ENCODE measurements at regions of chr3 and their contacts with region 1.

Region 1: GRCh38 chr3:36957862-36958686 is 13.2 kb upstream of the TRANK1 start:
- DNase-seq: no peak
- CTCF ChIP-seq: no peak

Region 2: GRCh38 chr3:36868614-36869436 is 89.2 kb before region 1 on chr3:
- CTCF ChIA-PET with region 1: interaction called, 28 read pairs
- POLR2A ChIA-PET with region 1: no interaction called
- DNase-seq: peak; percentile 57
- CTCF ChIP-seq: peak; percentile 76

Region 3: GRCh38 chr3:36893137-36893557 is 64.9 kb before region 1 on chr3:
- CTCF ChIA-PET with region 1: interaction called, 27 read pairs
- POLR2A ChIA-PET with region 1: no interaction called
- DNase-seq: peak; percentile 45
- CTCF ChIP-seq: no peak

Region 4: DNA sequence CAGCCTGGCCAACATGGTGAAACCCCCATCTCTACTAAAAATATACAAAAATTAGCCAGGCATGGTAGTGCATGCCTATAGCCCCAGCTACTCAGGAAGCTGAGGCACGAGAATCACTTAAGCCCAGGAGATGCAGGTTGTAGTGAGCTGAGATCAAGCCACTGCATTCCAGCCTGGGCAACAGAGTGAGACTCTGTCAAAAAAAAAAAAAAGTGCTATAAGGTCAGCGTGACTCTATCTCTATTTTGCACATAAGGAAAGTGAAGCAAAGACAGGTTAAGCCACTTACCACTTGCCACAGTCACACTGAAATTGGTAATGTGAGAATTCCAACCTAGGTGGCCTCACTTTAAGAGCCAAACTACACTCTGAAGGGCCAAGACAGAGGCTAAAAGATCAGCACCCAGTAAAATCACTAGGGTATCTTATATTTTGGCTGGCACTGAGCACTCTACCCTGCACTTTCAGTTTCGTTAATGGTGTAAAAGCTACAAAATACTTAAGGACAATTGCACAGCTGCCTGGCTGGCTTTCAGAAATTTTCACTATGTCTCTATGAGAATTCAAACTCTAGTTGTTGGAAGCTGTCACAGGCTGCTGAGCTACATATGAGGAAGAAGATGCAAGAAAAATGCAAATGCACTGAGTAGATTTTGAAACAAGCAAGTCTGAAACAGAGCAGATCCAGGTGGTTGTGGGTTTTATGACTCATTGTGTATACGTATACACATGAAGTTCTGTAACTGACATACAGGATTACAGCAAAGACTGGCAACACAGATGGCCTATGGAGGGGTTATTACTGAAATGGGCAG is 45.9 kb before region 1 on chr3:
- CTCF ChIA-PET with region 1: interaction called, 19 read pairs
- POLR2A ChIA-PET with region 1: no interaction called
- DNase-seq: peak; percentile 82
- CTCF ChIP-seq: no peak

Region 5: GRCh38 chr3:36933540-36934296 is 24.4 kb before region 1 on chr3:
- CTCF ChIA-PET with region 1: interaction called, 31 read pairs
- POLR2A ChIA-PET with region 1: no interaction called
- DNase-seq: no peak
- CTCF ChIP-seq: no peak

Region 6: DNA sequence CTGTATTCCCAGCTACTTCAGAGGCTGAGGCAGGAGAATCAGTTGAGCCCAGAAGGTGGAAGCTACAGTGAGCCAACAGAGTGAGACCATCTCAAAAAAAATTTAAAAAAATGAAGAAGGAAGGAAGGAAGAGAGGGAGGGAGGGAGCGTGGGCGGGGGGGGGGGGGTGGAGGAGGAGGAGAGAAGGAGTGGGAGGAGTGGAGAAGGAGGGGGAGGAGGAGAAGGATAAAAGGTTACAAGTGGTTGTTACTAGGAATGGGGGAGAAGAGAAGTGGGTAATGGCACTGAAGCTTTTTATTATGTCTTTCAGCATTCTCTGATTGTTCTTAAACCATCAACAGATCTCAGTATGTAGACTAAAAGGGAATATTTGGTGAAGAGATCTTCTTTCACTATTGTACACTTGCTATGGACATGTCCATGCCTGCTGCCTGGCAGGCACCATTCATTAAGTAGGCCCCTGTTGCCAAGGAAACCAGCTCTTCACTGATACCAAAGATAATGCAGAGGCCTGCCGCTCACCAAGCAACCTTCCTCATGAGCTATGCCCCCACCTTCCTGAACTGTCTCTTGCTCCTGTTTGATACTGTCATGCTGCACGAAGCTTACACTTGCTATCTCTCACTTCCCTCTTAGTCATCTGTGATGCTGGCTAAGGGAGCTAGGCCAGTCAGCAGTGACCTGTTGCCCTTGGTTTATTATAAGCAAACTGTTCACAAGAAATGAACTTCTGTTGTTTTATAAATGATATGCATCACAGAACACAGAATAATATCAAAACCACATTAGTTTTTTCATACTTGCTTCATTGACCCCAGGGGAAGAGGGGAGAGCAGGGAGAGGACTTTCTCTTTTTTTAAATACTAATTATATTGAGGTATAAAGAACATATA is 11.7 kb after region 1 on chr3:
- CTCF ChIA-PET with region 1: interaction called, 83 read pairs
- POLR2A ChIA-PET with region 1: no interaction called
- DNase-seq: peak; percentile 82
- CTCF ChIP-seq: no peak

Region 7: GRCh38 chr3:36993326-36994283 is 35.5 kb after region 1 on chr3 and contains the start of gene MLH1:
- CTCF ChIA-PET with region 1: interaction called, 23 read pairs
- POLR2A ChIA-PET with region 1: no interaction called
- DNase-seq: peak; percentile 85
- CTCF ChIP-seq: no peak

Measured in GM10248 (cell line).